HEK293T (cell line): ENCODE measurements at regions of chr3 and their contacts with region 1.

Region 1: DNA sequence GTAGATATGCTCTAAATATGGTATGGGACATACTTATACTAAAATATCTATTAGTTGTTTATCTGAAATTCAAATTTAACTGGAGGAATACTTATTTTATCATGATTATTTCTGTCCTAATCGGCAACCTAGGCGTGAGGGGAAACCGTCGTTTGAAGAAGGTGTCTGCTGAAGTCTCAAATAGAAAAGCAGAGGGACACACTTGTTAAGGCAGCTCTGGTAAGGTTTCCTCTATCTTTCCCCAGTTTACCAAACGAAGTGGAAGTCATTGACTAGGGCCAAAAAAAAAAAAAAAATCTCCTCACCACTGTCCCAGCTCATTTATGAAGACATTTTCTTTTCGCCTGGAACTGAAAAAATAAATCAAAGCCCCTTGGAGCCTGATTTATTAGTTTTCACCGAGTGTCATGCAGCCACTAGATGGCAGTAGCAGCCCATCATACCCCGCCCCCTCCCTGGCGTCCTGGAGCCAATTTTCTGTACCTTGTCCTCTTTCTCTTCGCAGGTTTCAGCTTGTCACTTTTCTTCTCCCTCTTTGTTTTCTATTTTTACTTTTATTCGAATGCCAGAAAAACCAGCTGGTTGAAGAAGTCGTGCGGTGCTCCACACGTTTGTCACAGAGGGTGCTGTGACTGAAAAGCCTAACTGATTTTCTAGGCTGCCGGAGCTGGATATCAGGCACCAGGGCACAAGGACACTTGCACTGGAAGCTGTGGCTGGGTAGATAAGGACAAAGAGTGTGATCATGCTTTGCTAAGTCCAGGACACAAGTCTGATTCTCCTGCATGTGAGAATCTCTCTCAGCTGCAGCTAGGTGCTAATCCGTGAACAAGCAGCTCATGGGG is 238.7 kb downstream of the ZPLD1 start:
- DNase-seq: peak; percentile 71

Region 2: GRCh38 chr3:102577091-102577789 is 96.3 kb before region 1 on chr3:
- CTCF ChIA-PET with region 1: no interaction called
- POLR2A ChIA-PET with region 1: no interaction called
- DNase-seq: no peak

Region 3: DNA sequence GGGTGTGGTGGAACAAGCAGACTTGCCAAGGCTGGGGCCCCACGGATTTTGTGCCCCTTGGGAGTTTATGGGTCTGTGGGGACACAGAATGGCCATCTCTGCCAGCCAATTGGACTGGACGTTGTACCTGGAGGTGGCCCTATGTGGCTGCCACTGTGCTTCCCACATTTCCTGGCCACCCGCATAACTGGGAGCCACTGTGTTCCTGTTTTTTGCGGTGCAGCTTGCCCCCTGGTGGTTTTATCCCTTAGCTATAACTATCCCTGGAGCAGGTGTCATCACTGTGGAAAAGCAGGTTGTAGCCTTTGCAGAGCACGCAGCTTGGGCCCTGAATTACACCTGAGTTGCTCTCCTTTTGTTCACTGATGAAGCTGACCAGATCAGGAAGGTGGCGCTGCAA is 67.6 kb after region 1 on chr3:
- CTCF ChIA-PET with region 1: interaction called, 10 read pairs
- POLR2A ChIA-PET with region 1: no interaction called
- DNase-seq: peak; percentile 9